ENCODE measurements at regions of chr15 and their contacts with region 1.

Region 1: DNA sequence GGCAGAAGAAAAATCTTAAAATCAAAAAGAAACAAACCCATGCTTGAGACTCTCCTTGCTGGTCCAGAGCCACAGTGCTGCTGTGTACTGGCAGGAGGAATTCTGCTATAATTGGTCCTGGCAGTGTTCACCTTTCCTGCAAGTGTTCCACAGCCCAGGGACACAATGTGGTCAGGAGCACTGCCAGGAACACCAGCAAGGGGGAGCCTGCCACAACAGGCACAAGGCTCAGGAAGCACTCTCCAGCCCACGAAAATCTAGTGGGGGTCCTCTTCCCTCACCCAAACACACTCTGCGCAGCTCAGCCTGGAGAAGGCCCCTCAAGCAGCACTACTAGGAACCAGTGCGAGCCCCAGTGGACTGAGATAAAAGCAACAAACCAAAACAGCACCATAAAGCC is 92.9 kb downstream of the UBE3A start:
- DNase-seq: no peak
- H3K4me3 ChIP-seq: no peak overlapping the region
- H3K27ac ChIP-seq: no peak overlapping the region
- H3K4me1 ChIP-seq: no peaks in the 10 kb centered on the region
- CTCF ChIP-seq: no peak

Region 2: DNA sequence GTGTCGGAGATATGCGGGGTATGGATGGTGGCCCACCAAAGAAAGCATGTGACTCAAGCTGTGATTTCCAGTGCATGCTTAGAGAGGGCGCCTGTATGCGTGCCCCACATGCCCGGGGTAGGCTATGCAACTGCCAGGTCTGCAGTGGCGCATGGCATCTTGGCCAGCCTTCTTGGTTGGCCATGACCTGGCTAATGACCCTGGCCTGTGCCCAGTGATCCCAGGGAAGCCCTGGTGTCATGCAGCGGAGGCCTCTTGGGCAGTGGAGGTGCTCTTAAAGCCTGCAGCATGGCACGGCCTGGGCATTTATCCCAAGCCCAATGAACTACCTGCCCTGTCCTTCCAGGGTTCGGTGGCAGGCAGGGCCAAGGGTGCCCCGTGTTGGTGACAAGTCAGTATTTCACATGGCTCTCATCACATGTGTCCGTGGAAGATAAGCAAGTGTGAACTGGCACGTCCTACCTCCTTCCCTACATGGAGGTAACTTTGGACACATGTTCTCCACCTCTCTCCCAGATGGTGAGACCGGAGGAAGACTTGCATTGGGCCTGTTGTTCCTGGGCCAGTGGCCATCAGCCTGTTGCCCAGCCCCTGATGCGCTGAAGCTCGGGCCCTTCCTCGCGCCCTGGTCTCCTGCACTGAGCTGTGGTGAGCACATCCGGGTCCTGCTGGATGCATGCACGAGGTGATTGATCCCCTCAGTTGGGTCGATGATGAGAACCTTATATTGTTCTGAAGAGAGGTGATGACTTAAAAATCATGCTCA is 99.1 kb before region 1 on chr15:
- CTCF ChIA-PET with region 1: no interaction called
- POLR2A ChIA-PET with region 1: no interaction called
- intact Hi-C with region 1: no loop called
- DNase-seq: no peak
- H3K4me3 ChIP-seq: no peak overlapping the region
- H3K27ac ChIP-seq: no peak overlapping the region
- H3K4me1 ChIP-seq: no peaks in the 10 kb centered on the region
- CTCF ChIP-seq: no peak

Region 3: DNA sequence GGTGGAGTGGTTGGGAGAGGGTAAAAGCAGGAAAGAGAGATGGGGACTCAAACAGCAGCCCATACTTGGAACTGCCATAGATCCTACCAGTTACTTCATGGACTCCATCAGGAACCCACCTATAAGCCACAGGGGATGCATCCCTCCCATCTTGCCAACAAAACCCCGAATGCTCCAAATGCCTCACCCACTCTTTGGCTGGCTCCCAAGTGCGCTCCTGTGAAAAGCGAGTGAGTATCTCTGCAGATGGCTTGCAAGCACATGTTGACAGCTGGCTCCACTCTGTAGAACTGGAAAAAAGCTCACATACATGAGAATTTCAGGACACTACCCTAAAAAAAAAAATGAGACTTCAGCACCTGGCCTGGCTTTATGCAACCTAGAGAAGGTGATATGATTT is 58.1 kb before region 1 on chr15:
- CTCF ChIA-PET with region 1: no interaction called
- POLR2A ChIA-PET with region 1: no interaction called
- intact Hi-C with region 1: no loop called
- DNase-seq: no peak
- H3K4me3 ChIP-seq: no peak overlapping the region
- H3K27ac ChIP-seq: no peak overlapping the region
- H3K4me1 ChIP-seq: no peaks in the 10 kb centered on the region
- CTCF ChIP-seq: no peak

Region 4: GRCh38 chr15:25362545-25362944 is 16.6 kb after region 1 on chr15:
- CTCF ChIA-PET with region 1: no interaction called
- POLR2A ChIA-PET with region 1: interaction called, 10 read pairs
- intact Hi-C with region 1: no loop called
- DNase-seq: no peak
- H3K4me3 ChIP-seq: no peak overlapping the region
- H3K27ac ChIP-seq: no peak overlapping the region
- H3K4me1 ChIP-seq: no peaks in the 10 kb centered on the region
- CTCF ChIP-seq: no peak